ENCODE measurements at regions of chr12 and their contacts with region 1.

Region 1: GRCh38 chr12:76348079-76348901 is at the start of gene BBS10:
- DNase-seq: peak; percentile 93
- H3K4me3 Mint-ChIP-seq: peak within 1 kb of the TSS; percentile 91
- H3K27ac Mint-ChIP-seq: peak within 1 kb of the TSS; percentile 90
- H3K4me1 Mint-ChIP-seq: peaks cover 25% of the 10 kb centered on the region
- H3K27me3 Mint-ChIP-seq: no peaks in the 10 kb centered on the region
- total RNA-seq, gene BBS10: 3.2 to 3.4 TPM

Region 2: DNA sequence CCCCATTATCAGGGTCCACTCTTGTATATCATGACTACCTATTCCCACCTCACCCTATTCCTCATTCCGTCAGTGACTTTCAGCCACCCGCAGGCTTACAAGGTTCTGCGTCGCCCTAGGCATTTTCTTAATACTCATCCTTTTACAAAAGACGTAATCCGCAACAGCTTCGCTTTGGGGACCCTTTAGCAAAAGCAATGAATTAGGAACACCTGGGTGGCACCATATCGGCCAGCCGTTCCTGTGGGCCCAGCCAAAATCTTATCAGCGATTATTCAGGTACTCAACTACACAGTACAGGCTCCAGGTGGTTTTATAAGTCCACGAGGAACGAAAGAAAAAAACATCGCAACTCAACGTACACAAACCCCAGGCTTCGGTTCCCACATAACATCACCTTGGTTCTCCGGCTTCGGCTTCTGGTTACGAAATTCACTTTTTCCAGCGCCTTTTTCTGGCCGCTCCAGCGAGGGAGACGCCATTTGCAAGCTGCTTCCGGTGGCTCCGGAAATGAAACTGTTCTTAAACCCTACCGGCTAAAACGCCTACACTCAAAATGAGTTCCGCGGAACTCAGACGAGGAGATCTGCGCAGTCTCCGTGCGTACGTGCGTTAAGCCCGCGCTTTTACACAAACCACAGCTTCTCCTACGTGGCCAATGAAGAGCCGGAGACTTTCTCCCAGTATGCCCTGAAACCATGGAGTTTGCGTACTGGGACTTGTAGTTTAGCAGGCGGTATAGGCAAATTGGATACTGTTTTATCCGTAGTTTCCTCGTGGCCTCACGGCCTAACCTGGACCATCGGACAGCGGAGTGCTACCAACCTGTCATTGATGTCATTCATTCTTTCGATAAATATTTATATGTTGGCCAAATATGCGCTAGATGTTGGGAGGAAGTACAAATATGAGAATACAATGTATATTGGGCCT is 836.9 kb before region 1 on chr12 and contains the start of gene KRR1:
- CTCF ChIA-PET with region 1: no interaction called
- POLR2A ChIA-PET with region 1: no interaction called
- intact Hi-C with region 1: loop called (anchors 1 kb)
- DNase-seq: peak; percentile 95
- H3K4me3 Mint-ChIP-seq: peak within 1 kb of the TSS; percentile 99
- H3K27ac Mint-ChIP-seq: peak within 1 kb of the TSS; percentile 98
- H3K4me1 Mint-ChIP-seq: peaks cover 31% of the 10 kb centered on the region
- H3K27me3 Mint-ChIP-seq: no peaks in the 10 kb centered on the region
- total RNA-seq, gene KRR1: 96.6 to 106 TPM

Region 3: GRCh38 chr12:76037130-76038103 is 310.9 kb before region 1 on chr12:
- CTCF ChIA-PET with region 1: interaction called, 4 read pairs
- POLR2A ChIA-PET with region 1: no interaction called
- intact Hi-C with region 1: loop called (anchors 2 kb)
- DNase-seq: no peak
- H3K4me3 Mint-ChIP-seq: no peak overlapping the region
- H3K27ac Mint-ChIP-seq: no peak overlapping the region
- H3K4me1 Mint-ChIP-seq: peaks cover 19% of the 10 kb centered on the region
- H3K27me3 Mint-ChIP-seq: no peaks in the 10 kb centered on the region

Region 4: DNA sequence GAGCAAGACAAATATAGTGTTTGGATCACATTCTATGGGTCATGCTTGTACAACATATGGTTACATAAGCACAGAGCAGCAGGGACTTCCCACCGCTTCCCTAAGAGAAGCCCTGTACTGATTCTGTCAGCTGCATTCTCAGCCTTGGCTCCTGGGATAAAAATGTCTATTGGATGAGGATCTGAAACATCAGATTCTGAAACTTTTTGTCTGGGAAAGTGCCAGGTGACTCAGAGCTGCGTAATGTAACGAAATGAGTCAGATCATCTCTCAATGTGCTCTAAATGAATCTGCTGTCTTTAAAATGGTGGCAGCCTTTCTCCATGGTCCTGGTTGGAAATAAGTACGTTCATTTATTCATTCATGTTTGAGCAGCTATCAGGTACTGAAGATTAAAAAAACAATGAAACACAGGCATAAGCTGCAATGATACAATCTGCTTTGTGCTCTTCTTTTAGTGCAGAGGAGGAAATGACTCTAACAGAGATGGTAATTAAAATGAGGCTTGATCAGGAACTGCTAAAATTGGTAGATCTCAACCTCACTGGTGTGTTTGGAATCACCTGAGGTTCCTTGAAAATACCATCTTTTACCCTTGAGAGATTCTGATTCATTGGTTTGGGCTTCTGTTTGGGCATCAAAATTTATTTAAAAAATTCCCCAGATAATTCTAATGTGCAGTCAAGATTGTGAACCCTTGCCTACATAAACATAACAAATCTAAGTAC is 164.7 kb before region 1 on chr12:
- CTCF ChIA-PET with region 1: no interaction called
- POLR2A ChIA-PET with region 1: interaction called, 4 read pairs
- intact Hi-C with region 1: loop called (anchors 1 kb)
- DNase-seq: peak; percentile 81
- H3K4me3 Mint-ChIP-seq: no peak overlapping the region
- H3K27ac Mint-ChIP-seq: no peak overlapping the region
- H3K4me1 Mint-ChIP-seq: peaks cover 12% of the 10 kb centered on the region
- H3K27me3 Mint-ChIP-seq: peaks cover 56% of the 10 kb centered on the region

Region 5: DNA sequence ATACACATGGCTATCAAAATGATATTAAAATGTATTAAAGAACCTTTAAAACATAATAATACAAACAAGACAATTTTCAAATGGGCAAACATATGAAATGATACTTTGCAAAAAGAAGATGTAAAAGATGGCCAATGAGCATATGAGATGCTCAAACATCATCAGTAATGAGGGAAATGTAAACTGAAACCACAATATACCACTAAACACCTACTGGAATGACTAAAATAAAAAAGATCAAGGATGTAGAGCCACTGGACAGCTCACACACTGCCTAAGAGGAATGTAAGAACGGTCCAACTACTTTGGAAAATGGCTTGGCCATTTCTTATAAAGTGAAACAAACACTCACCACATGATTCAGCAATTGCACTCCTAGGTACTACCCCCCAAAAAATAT is 97.2 kb after region 1 on chr12:
- CTCF ChIA-PET with region 1: interaction called, 5 read pairs
- POLR2A ChIA-PET with region 1: no interaction called
- intact Hi-C with region 1: loop called (anchors 5 kb)
- DNase-seq: no peak
- H3K4me3 Mint-ChIP-seq: no peak overlapping the region
- H3K27ac Mint-ChIP-seq: no peak overlapping the region
- H3K4me1 Mint-ChIP-seq: peaks cover 43% of the 10 kb centered on the region
- H3K27me3 Mint-ChIP-seq: no peaks in the 10 kb centered on the region

Region 6: DNA sequence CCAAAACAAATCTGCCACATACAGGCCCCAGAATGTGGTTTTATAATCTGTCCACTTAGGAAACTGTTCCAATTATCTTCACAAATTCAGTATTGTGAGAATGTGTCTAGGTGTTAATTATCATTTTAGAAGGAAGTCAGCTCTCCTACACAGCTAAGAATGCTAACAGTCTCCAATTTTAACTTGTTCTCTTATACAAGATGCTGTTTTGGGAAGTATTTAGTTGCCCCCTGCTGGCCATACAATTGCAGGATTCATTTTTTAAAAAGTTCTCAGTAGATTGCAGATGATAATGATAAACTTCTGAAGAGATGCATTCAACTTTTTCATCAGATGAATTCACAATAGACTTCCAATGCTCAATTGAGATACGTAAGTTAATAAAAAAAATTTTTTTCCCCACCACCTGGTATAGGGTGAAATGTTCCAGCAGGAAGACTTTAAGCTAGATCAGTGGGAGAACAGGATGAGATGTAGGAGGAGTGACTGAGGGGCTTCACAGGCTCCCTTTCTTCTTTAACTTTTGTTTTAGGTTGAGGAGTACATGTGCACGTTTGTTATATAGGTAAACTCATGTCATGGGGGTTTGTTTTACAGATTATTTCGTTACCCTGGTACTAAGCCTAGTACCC is 238.6 kb after region 1 on chr12:
- CTCF ChIA-PET with region 1: no interaction called
- POLR2A ChIA-PET with region 1: no interaction called
- intact Hi-C with region 1: loop called (anchors 1 kb)
- DNase-seq: peak; percentile 18
- H3K4me3 Mint-ChIP-seq: no peak overlapping the region
- H3K27ac Mint-ChIP-seq: no peak overlapping the region
- H3K4me1 Mint-ChIP-seq: peaks cover 1% of the 10 kb centered on the region
- H3K27me3 Mint-ChIP-seq: no peaks in the 10 kb centered on the region